CD8-positive, alpha-beta T cell (primary cell): ENCODE measurements at regions of chr3 and their contacts with region 1.

Region 1: GRCh38 chr3:19543212-19543841 is 390.7 kb downstream of the EFHB start:
- DNase-seq: peak in 1 of 9 experiments; percentile 1
- ATAC-seq: no peak
- H3K4me3 ChIP-seq: no peak overlapping the region
- H3K4me3 Mint-ChIP-seq: no peak overlapping the region
- H3K27ac ChIP-seq: no peak overlapping the region
- H3K27ac Mint-ChIP-seq: no peak overlapping the region
- H3K4me1 ChIP-seq: no peaks in the 10 kb centered on the region
- H3K4me1 Mint-ChIP-seq: no peaks in the 10 kb centered on the region
- H3K27me3 ChIP-seq: no peaks in the 10 kb centered on the region
- H3K27me3 Mint-ChIP-seq: no peaks in the 10 kb centered on the region
- CTCF ChIP-seq: no peak

Region 2: DNA sequence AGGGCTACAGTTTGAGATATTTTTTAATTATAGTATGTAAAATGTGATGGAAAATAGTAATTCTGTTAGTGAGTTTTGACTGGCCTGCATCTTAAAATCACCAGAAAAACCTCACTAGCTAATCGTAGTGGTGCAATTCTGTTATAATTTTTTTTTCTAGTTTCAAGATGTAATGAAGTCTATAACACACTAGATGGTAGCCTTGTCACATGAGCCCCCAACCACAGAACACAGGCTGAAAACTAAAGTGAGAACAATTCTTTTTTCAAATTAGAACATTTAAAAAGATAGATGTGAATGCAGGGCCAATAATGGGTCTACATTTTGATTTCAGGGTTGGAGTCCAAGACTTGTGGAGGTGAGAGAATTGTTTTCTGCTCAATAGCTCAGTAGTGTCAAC is 478.3 kb before region 1 on chr3:
- CTCF ChIA-PET with region 1: no interaction called
- POLR2A ChIA-PET with region 1: no interaction called
- intact Hi-C with region 1: loop called in 1 of 2 experiments (anchors 2 kb)
- DNase-seq: peak in 2 of 9 experiments; percentile 6 to 34
- ATAC-seq: no peak
- H3K4me3 ChIP-seq: no peak overlapping the region
- H3K4me3 Mint-ChIP-seq: no peak overlapping the region
- H3K27ac ChIP-seq: no peak overlapping the region
- H3K27ac Mint-ChIP-seq: no peak overlapping the region
- H3K4me1 ChIP-seq: no peaks in the 10 kb centered on the region
- H3K4me1 Mint-ChIP-seq: no peaks in the 10 kb centered on the region
- H3K27me3 ChIP-seq: no peaks in the 10 kb centered on the region
- H3K27me3 Mint-ChIP-seq: peaks cover 2% of the 10 kb centered on the region
- CTCF ChIP-seq: peak; percentile 40

Region 3: DNA sequence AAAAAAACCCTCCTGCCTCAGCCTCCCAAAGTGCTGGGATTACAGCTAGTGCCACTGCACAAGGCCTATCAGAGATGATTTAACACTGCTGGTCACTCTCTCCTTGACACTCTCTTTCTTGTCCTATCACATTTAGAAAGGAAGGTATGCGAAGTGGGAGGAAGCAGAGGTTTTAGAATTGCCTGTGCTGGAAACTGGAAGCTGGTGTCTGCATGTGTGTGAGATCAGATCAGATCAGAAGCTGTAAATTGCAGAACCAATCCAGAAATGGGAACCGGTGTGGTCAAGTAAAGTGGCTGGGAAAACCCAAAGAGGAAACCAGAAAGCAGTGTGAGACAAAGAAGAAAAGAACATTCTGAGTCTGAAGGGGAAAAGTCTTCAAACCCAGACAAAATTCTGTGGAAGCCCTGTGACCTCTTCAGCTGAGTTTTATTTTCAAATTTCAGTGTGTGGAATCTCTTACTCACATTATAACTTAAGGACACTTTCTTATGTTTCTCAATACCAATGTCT is 387.9 kb after region 1 on chr3:
- CTCF ChIA-PET with region 1: no interaction called
- POLR2A ChIA-PET with region 1: no interaction called
- intact Hi-C with region 1: no loop called
- DNase-seq: peak in 2 of 9 experiments; percentile 14 to 29
- ATAC-seq: no peak
- H3K4me3 ChIP-seq: no peak overlapping the region
- H3K4me3 Mint-ChIP-seq: no peak overlapping the region
- H3K27ac ChIP-seq: no peak overlapping the region
- H3K27ac Mint-ChIP-seq: no peak overlapping the region
- H3K4me1 ChIP-seq: no peaks in the 10 kb centered on the region
- H3K4me1 Mint-ChIP-seq: no peaks in the 10 kb centered on the region
- H3K27me3 ChIP-seq: peaks cover 0 to 5% of the 10 kb centered on the region in 2 experiments
- H3K27me3 Mint-ChIP-seq: peaks cover 24% of the 10 kb centered on the region
- CTCF ChIP-seq: no peak